HepG2 (cell line): ENCODE measurements at regions of chr4 and their contacts with region 1.

Region 1: GRCh38 chr4:122218762-122219161 is 66.6 kb downstream of the BLTP1 start:
- DNase-seq: peak; percentile 8
- ATAC-seq: peak; percentile 59; the same call in 2 of the 3 replicates
- H3K4me3 ChIP-seq: no peak overlapping the region
- H3K27ac ChIP-seq: no peak overlapping the region
- H3K4me1 ChIP-seq: peaks cover 6% of the 10 kb centered on the region
- H3K27me3 ChIP-seq: no peaks in the 10 kb centered on the region
- CTCF ChIP-seq: no peak
- EP300 ChIP-seq: no peak
- POLR2A ChIP-seq: no peak
- RAD21 ChIP-seq: no peak

Region 2: GRCh38 chr4:121923306-121923705 is 295.5 kb before region 1 on chr4:
- CTCF ChIA-PET with region 1: no interaction called
- POLR2A ChIA-PET with region 1: no interaction called
- in situ Hi-C with region 1: no loop called
- intact Hi-C with region 1: no loop called
- DNase-seq: no peak
- ATAC-seq: no peak
- H3K4me3 ChIP-seq: no peak overlapping the region
- H3K27ac ChIP-seq: no peak overlapping the region
- H3K4me1 ChIP-seq: no peaks in the 10 kb centered on the region
- H3K27me3 ChIP-seq: 0 out of 5 replicates have a peak, but pooled peaks cover 0 to 2% of the 10 kb centered on the region in 2 experiments
- CTCF ChIP-seq: no peak
- EP300 ChIP-seq: no peak
- POLR2A ChIP-seq: no peak
- RAD21 ChIP-seq: no peak

Region 3: DNA sequence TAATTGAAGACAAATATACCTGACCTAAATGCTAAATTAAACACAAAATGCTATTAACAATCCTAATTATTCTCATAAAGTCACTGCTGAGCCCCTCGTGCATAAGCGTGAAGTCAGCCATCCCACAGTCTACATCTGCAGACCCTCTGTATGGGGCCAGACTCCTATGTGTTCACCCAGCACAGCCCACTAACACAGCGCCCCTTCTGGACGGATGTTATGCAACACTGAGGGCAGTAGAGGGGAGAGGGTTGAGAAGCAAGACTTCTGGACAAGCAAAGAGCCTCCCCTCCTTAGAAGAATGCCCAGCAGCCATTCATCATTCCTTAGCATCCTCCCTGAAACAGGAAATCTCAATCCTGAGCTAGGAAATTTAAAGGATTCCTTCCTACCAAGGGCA is 274.8 kb before region 1 on chr4:
- CTCF ChIA-PET with region 1: no interaction called
- POLR2A ChIA-PET with region 1: no interaction called
- in situ Hi-C with region 1: no loop called
- intact Hi-C with region 1: loop called (anchors 10 kb)
- DNase-seq: peak; percentile 10
- ATAC-seq: peak; percentile 94
- H3K4me3 ChIP-seq: no peak overlapping the region
- H3K27ac ChIP-seq: no peak overlapping the region
- H3K4me1 ChIP-seq: no peaks in the 10 kb centered on the region
- H3K27me3 ChIP-seq: peaks cover 0 to 9% of the 10 kb centered on the region in 2 experiments; a peak in 3 of 5 replicates
- CTCF ChIP-seq: peak; percentile 34
- EP300 ChIP-seq: no peak
- POLR2A ChIP-seq: no peak
- RAD21 ChIP-seq: no peak

Region 4: DNA sequence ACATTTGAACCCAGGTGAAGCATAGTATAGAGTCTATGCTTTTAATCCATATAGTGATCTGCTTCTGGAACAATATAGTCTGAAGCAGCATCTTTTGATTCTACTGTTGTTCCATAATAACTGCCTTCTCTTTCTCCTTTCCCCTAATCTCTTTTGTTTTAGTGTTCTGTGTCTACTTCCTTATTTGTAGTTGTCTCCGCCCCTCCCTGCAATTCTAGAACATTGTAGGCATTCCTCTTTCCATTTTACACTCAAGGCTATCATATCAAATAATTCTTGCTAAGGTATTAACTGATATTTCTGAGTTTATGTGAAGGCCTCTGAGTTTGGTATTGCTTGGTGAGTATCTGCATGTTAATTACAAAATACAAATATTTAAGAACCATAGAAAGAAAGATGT is 55.0 kb before region 1 on chr4:
- CTCF ChIA-PET with region 1: no interaction called
- POLR2A ChIA-PET with region 1: no interaction called
- in situ Hi-C with region 1: no loop called
- intact Hi-C with region 1: no loop called
- DNase-seq: no peak
- ATAC-seq: no peak
- H3K4me3 ChIP-seq: no peak overlapping the region
- H3K27ac ChIP-seq: no peak overlapping the region
- H3K4me1 ChIP-seq: no peaks in the 10 kb centered on the region
- H3K27me3 ChIP-seq: no peaks in the 10 kb centered on the region
- CTCF ChIP-seq: no peak
- EP300 ChIP-seq: no peak
- POLR2A ChIP-seq: no peak
- RAD21 ChIP-seq: no peak